CD4-positive, alpha-beta memory T cell (primary cell): ENCODE measurements at regions of chr6 and their contacts with region 1.

Region 1: GRCh38 chr6:154928325-154928922 is 66.7 kb upstream of the TIAM2 start:
- DNase-seq: peak; percentile 48 to 56 (median 54)
- H3K4me3 ChIP-seq: no peak overlapping the region
- H3K4me3 Mint-ChIP-seq: no peak overlapping the region
- H3K27ac ChIP-seq: no peak overlapping the region
- H3K27ac Mint-ChIP-seq: peak overlapping the region in 1 of 7 donors; percentile 65
- H3K4me1 ChIP-seq: peaks cover 3% of the 10 kb centered on the region
- H3K4me1 Mint-ChIP-seq: peaks cover 0 to 6% (median 3%) of the 10 kb centered on the region in 4 donors
- H3K27me3 ChIP-seq: no peaks in the 10 kb centered on the region
- H3K27me3 Mint-ChIP-seq: no peaks in the 10 kb centered on the region

Region 2: DNA sequence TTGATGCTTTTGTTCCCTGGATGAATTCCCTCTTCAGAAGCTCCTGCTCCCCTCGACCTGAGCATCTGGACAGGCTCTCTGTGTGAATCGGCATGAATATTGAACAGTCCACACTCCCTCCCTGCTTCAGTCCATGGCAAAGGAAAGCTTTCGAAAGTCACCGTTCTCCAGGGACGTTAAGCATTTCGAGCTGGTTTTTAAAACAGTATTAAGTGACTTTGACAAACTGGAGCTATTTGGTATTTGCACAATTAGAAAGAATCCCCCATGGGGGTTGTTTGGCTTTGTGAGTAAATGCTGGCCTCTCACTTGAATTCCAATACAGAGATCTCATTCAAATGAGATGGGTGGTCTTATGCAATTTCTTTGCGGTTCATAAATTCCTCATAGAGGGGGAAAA is 18.6 kb before region 1 on chr6:
- CTCF ChIA-PET with region 1: interaction called, 25 read pairs
- POLR2A ChIA-PET with region 1: no interaction called
- intact Hi-C with region 1: no loop called
- DNase-seq: no peak
- H3K4me3 ChIP-seq: no peak overlapping the region
- H3K4me3 Mint-ChIP-seq: no peak overlapping the region
- H3K27ac ChIP-seq: no peak overlapping the region
- H3K27ac Mint-ChIP-seq: no peak overlapping the region
- H3K4me1 ChIP-seq: no peaks in the 10 kb centered on the region
- H3K4me1 Mint-ChIP-seq: no peaks in the 10 kb centered on the region
- H3K27me3 ChIP-seq: no peaks in the 10 kb centered on the region
- H3K27me3 Mint-ChIP-seq: no peaks in the 10 kb centered on the region

Region 3: DNA sequence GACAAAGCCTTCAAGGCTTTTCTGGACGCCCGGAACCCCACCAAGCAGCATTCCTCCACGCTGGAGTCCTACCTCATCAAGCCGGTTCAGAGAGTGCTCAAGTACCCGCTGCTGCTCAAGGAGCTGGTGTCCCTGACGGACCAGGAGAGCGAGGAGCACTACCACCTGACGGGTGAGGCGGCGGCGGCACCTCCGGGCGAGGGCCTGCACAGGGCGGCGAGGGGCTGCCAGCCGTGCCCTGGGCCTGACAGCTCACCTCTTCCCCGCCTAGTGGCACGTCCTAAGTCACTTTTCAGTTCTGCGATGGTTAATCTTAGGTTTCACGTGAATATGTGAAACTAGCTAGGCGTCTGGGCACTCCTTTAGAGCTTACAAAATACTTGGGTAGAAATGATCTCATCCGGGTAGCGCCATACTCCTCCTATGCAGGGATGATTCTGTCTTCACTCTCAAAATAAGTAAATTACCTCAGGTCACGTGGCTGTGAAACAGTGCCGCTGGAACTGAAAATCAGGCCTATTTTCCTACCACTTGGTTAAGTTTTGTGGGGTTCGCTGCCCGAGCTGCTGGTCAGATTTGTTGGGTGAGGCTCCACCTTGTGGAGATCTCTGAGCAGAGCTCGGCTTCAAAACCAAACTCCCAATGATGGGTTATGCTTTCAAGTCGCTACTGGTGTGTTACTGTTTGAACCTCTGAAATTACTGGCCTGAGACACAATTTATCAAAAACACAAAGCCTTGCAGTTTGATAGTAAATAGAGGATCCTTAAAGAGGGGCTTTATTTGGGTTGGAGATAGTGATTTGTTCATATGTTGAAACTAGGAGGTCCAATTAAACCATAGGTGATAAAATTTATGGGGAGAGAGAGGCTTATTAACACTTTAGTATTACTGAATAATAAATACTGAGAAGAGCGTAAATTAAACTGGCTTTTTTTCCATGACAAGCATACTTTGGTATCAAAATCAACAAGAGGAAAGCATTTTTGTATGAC is 319.9 kb after region 1 on chr6:
- CTCF ChIA-PET with region 1: interaction called, 10 read pairs
- POLR2A ChIA-PET with region 1: no interaction called
- intact Hi-C with region 1: no loop called
- DNase-seq: peak in 2 of 5 donors; percentile 2 to 3
- H3K4me3 ChIP-seq: no peak overlapping the region
- H3K4me3 Mint-ChIP-seq: no peak overlapping the region
- H3K27ac ChIP-seq: no peak overlapping the region
- H3K27ac Mint-ChIP-seq: peak overlapping the region in 3 of 7 donors; percentile 18 to 58 (median 42)
- H3K4me1 ChIP-seq: no peaks in the 10 kb centered on the region
- H3K4me1 Mint-ChIP-seq: peaks cover 0 to 3% (median 0%) of the 10 kb centered on the region in 4 donors
- H3K27me3 ChIP-seq: no peaks in the 10 kb centered on the region
- H3K27me3 Mint-ChIP-seq: no peaks in the 10 kb centered on the region